HepG2 (cell line): ENCODE measurements at regions of chr20 and their contacts with region 1.

Region 1: GRCh38 chr20:35954200-35954906 is at the start of gene SCAND1:
- DNase-seq: peak; percentile 99
- ATAC-seq: peak; percentile 92
- H3K4me3 ChIP-seq: peak within 1 kb of the TSS; percentile 86 to 99 (median 97)
- H3K27ac ChIP-seq: peak within 1 kb of the TSS; percentile 97
- H3K4me1 ChIP-seq: peaks cover 23% of the 10 kb centered on the region
- H3K27me3 ChIP-seq: no peaks in the 10 kb centered on the region; a peak in 1 of 5 replicates
- CTCF ChIP-seq: peak; percentile 100
- EP300 ChIP-seq: peak; percentile 73 to 82
- POLR2A ChIP-seq: peak; percentile 97
- RAD21 ChIP-seq: peak; percentile 93
- total RNA-seq, gene SCAND1: 86.3 and 109 TPM in 2 replicates

Region 2: DNA sequence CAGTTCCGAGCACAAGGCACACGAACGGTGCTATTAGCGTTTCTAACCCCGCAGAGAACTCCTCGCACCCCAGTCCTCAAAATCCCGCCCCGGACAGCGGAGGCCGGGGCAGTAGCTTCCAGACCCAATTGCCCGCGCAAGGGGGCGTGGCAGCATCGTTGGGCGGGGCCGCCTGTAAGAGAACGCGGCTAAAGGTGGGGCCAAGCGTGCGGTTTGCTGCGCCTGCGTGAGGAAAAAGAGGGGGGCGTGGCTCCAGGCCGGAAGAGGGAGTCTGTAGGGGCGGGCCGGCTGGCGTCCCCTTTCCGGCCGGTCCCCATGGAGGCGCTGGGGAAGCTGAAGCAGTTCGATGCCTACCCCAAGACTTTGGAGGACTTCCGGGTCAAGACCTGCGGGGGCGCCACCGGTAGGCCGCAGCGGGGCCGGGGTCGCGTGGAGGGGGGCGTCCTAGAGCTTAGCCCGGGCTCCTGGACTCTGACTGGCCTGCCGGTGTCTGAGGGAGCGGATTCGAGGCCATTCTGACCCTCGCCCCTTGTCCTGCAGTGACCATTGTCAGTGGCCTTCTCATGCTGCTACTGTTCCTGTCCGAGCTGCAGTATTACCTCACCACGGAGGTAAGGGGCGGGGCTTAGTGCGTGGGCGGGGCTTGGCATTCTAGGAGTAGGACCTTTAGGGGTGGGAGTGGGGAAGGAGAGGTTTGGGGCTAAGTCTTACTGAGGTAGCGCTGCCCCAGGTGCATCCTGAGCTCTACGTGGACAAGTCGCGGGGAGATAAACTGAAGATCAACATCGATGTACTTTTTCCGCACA is 412.4 kb before region 1 on chr20 and contains the start of gene ERGIC3:
- CTCF ChIA-PET with region 1: no interaction called
- POLR2A ChIA-PET with region 1: interaction called, 16 read pairs
- in situ Hi-C with region 1: no loop called
- intact Hi-C with region 1: no loop called
- DNase-seq: peak; percentile 97
- ATAC-seq: peak; percentile 93
- H3K4me3 ChIP-seq: peak within 1 kb of the TSS; percentile 74 to 93 (median 79)
- H3K27ac ChIP-seq: peak within 1 kb of the TSS; percentile 85
- H3K4me1 ChIP-seq: peaks cover 29% of the 10 kb centered on the region
- H3K27me3 ChIP-seq: no peaks in the 10 kb centered on the region
- CTCF ChIP-seq: peak; percentile 43; the same call in 1 of the 2 replicates
- EP300 ChIP-seq: no peak
- POLR2A ChIP-seq: peak; percentile 82 to 92
- RAD21 ChIP-seq: no peak; the same call in 1 of the 2 replicates
- total RNA-seq, gene ERGIC3: 224 and 407 TPM in 2 replicates

Region 3: GRCh38 chr20:35942243-35942642 is 12.1 kb before region 1 on chr20:
- CTCF ChIA-PET with region 1: no interaction called
- POLR2A ChIA-PET with region 1: interaction called, 15 read pairs
- in situ Hi-C with region 1: no loop called
- intact Hi-C with region 1: no loop called
- DNase-seq: no peak
- ATAC-seq: no peak
- H3K4me3 ChIP-seq: no peak overlapping the region
- H3K27ac ChIP-seq: no peak overlapping the region
- H3K4me1 ChIP-seq: no peaks in the 10 kb centered on the region
- H3K27me3 ChIP-seq: no peaks in the 10 kb centered on the region
- CTCF ChIP-seq: no peak
- EP300 ChIP-seq: no peak
- POLR2A ChIP-seq: no peak
- RAD21 ChIP-seq: no peak

Region 4: GRCh38 chr20:36064658-36065426 is 110.5 kb after region 1 on chr20:
- CTCF ChIA-PET with region 1: no interaction called
- POLR2A ChIA-PET with region 1: interaction called, 13 read pairs
- in situ Hi-C with region 1: no loop called
- intact Hi-C with region 1: no loop called
- DNase-seq: peak; percentile 85
- ATAC-seq: peak; percentile 93
- H3K4me3 ChIP-seq: peak overlapping the region; percentile 59 to 83 (median 62); a peak in 5 of 6 replicates
- H3K27ac ChIP-seq: peak overlapping the region; percentile 9
- H3K4me1 ChIP-seq: peaks cover 48% of the 10 kb centered on the region
- H3K27me3 ChIP-seq: peaks cover 0 to 4% of the 10 kb centered on the region in 2 experiments; a peak in 2 of 5 replicates
- CTCF ChIP-seq: peak; percentile 41; the same call in 1 of the 2 replicates
- EP300 ChIP-seq: no peak
- POLR2A ChIP-seq: peak; percentile 52 to 65
- RAD21 ChIP-seq: peak; percentile 21; the same call in 1 of the 2 replicates

Region 5: GRCh38 chr20:36181934-36182603 is 227.7 kb after region 1 on chr20:
- CTCF ChIA-PET with region 1: no interaction called
- POLR2A ChIA-PET with region 1: interaction called, 18 read pairs
- in situ Hi-C with region 1: no loop called
- intact Hi-C with region 1: no loop called
- DNase-seq: peak; percentile 78
- ATAC-seq: peak; percentile 49
- H3K4me3 ChIP-seq: peak overlapping the region in 1 of 3 experiments; percentile 41; a peak in 2 of 6 replicates
- H3K27ac ChIP-seq: peak overlapping the region; percentile 94
- H3K4me1 ChIP-seq: peaks cover 46% of the 10 kb centered on the region
- H3K27me3 ChIP-seq: no peaks in the 10 kb centered on the region
- CTCF ChIP-seq: 0 out of 2 replicates have a peak, but pooled peaks have one; percentile 1
- EP300 ChIP-seq: peak; percentile 34 to 35; a peak in 2 of 4 replicates
- POLR2A ChIP-seq: no peak; a peak in 1 of 4 replicates
- RAD21 ChIP-seq: no peak